ENCODE measurements at regions of chr22 and their contacts with region 1.

Region 1: DNA sequence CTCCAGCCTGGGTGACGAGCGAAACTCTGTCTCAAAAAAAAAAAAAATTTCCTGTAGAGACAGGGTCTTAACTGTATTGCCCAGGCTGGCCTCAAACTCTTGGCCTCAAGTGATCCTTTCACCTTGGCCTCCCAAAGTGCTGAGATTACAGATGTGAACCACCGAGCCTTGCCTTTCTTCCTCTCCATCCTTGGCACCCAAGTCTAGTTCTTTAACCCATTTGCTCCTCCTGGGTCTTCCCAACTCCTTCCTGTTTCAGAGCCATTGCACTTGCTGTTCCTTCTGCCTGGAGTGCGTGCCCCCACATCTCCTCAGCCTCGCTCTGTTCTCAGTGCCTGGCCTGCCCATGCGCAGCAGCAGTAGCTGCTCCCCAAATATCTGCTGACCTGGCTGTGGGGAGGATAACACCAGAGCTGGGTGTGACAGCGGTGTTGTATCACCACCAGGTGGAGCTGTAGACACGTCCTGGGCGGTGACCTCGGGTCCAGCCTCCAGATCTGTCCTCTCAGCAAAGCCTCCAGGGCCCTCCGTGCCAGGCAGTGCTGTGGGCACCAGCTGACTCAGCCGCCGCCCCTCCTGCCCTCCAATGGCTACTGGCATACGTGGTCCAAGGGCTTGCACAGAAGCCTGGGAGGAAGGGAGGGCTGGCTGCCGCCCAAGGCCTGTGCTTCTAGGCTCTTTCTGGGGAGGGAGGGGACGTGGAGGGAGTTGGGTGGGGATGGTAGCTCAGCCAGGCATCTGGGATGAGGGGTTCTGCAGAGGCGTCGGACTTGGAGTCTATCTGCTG is 22.0 kb downstream of the TEF start:
- DNase-seq: peak; percentile 92
- H3K4me3 ChIP-seq: no peak overlapping the region
- H3K27ac ChIP-seq: no peak overlapping the region
- H3K4me1 ChIP-seq: peaks cover 12% of the 10 kb centered on the region
- H3K27me3 ChIP-seq: no peaks in the 10 kb centered on the region

Region 2: DNA sequence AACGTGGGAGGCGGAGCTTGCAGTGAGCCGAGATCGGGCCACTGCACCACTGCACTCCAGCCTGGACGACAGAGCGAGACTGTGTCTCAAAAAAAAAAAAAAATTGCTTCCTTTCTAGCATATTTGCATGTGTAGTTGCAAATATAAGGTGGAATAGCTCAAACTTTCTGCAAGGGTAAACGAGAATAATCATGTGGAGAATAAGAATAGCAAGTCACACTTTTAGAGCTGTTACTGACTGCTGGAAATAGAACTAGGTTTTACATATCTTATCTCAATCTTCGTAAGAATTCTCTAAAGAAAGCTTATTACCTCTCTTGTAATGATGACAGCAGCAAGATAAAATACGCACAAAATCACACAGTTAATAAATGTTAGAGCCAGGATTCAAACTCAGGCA is 197.0 kb before region 1 on chr22:
- in situ Hi-C with region 1: no loop called
- DNase-seq: no peak
- H3K4me3 ChIP-seq: no peak overlapping the region
- H3K27ac ChIP-seq: no peak overlapping the region
- H3K4me1 ChIP-seq: peaks cover 5% of the 10 kb centered on the region
- H3K27me3 ChIP-seq: no peaks in the 10 kb centered on the region

Region 3: DNA sequence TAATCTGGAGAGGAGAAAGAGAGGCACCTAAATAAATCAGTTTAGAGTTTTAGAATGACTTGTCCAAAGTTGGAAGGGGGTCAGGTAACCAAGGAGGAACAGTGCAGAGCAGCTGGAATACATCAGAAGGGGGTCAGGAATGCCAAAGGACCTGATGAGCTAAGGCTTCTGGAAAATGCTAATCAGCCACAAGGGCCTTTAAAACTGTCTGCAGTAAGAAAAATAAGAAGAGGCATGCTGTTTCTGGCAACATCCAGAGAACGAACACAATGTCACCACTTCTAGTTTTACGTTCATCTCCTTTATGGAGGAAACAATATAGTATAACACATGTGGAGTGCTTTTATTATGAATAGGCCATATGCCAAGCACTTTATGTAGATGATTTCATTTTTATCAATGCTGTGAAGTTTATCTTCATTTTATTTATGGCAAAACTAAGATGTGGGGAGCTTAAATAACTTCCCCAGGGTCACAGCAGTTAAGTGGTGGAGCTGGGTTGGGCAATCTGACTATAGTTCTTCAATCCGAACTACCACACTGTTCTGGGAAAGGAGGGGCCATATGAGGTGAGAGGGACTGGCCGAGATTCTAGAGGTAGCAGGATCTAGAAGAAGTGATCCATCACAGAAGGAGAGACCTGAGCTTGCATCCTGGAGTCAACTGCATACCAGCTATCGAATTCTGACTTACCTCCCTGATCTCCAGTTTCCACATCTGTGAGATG is 87.8 kb after region 1 on chr22:
- in situ Hi-C with region 1: no loop called
- DNase-seq: no peak
- H3K4me3 ChIP-seq: no peak overlapping the region
- H3K27ac ChIP-seq: no peak overlapping the region
- H3K4me1 ChIP-seq: no peaks in the 10 kb centered on the region
- H3K27me3 ChIP-seq: no peaks in the 10 kb centered on the region

Region 4: GRCh38 chr22:41517172-41518047 is 113.7 kb after region 1 on chr22:
- in situ Hi-C with region 1: loop called (anchors 10 kb)
- DNase-seq: peak; percentile 72
- H3K4me3 ChIP-seq: no peak overlapping the region
- H3K27ac ChIP-seq: no peak overlapping the region
- H3K4me1 ChIP-seq: peaks cover 8% of the 10 kb centered on the region
- H3K27me3 ChIP-seq: no peaks in the 10 kb centered on the region

Region 5: GRCh38 chr22:43053176-43053575 is 1649.5 kb after region 1 on chr22:
- in situ Hi-C with region 1: no loop called
- DNase-seq: no peak
- H3K4me3 ChIP-seq: no peak overlapping the region
- H3K27ac ChIP-seq: no peak overlapping the region
- H3K4me1 ChIP-seq: no peaks in the 10 kb centered on the region
- H3K27me3 ChIP-seq: no peaks in the 10 kb centered on the region